ENCODE measurements at regions of chr6 and their contacts with region 1.

Region 1: DNA sequence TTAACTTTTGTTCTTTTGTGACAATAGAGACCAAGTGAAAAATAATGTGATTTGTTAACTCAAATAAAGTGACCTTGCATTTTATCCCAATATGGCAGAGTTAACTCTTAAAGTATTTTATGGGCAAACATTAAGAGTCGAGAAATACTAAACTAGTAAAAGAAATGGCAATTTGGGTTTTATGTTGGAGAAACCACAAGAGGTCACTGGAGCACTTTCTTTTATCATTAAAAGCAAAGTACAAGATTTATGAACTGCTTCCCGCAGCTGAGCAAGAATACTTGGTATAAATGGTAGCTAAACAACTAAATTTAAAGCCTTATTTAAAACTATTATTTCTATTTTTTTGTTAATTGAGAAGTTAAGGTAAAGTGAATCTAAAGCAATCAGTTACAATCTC is 33.5 kb upstream of the MCM9 start:
- DNase-seq: peak in 1 of 4 experiments; percentile 49
- ATAC-seq: peak; percentile 78
- H3K4me3 ChIP-seq: no peak overlapping the region
- H3K27ac ChIP-seq: no peak overlapping the region
- H3K4me1 ChIP-seq: no peaks in the 10 kb centered on the region
- H3K27me3 ChIP-seq: no peaks in the 10 kb centered on the region
- CTCF ChIP-seq: peak; percentile 23 to 73 (median 32); a peak in 3 of 6 replicates
- EP300 ChIP-seq: no peak
- POLR2A ChIP-seq: no peak
- RAD21 ChIP-seq: peak; percentile 83

Region 2: GRCh38 chr6:119078376-119079282 is 110.2 kb after region 1 on chr6 and contains the start of gene FAM184A:
- CTCF ChIA-PET with region 1: interaction called, 3 read pairs
- POLR2A ChIA-PET with region 1: no interaction called
- in situ Hi-C with region 1: no loop called
- intact Hi-C with region 1: loop called (anchors 2 kb)
- DNase-seq: peak; percentile 84 to 87 (median 86)
- ATAC-seq: peak; percentile 91
- H3K4me3 ChIP-seq: peak within 1 kb of the TSS; percentile 74
- H3K27ac ChIP-seq: peak within 1 kb of the TSS; percentile 79
- H3K4me1 ChIP-seq: peaks cover 13 to 15% of the 10 kb centered on the region in 2 experiments; a peak in 3 of 5 replicates
- H3K27me3 ChIP-seq: no peaks in the 10 kb centered on the region
- CTCF ChIP-seq: peak; percentile 58 to 92 (median 70)
- EP300 ChIP-seq: peak; percentile 13; the same call in 1 of the 2 replicates
- POLR2A ChIP-seq: peak; percentile 71
- RAD21 ChIP-seq: peak; percentile 35 to 53
- polyA plus RNA-seq, gene FAM184A: 6.4 to 9.3 TPM

Region 3: GRCh38 chr6:119110601-119111548 is 142.5 kb after region 1 on chr6:
- CTCF ChIA-PET with region 1: interaction called, 48 read pairs
- POLR2A ChIA-PET with region 1: interaction called, 7 read pairs
- in situ Hi-C with region 1: loop called (anchors 5 kb)
- intact Hi-C with region 1: loop called (anchors 1 kb)
- DNase-seq: peak; percentile 58 to 79 (median 64)
- ATAC-seq: peak; percentile 92
- H3K4me3 ChIP-seq: no peak overlapping the region
- H3K27ac ChIP-seq: no peak overlapping the region
- H3K4me1 ChIP-seq: peaks cover 3 to 16% of the 10 kb centered on the region in 2 experiments; a peak in 3 of 5 replicates
- H3K27me3 ChIP-seq: no peaks in the 10 kb centered on the region
- CTCF ChIP-seq: peak; percentile 68 to 86 (median 72)
- EP300 ChIP-seq: no peak
- POLR2A ChIP-seq: no peak
- RAD21 ChIP-seq: peak; percentile 97 to 98

Region 4: GRCh38 chr6:119340796-119341487 is 372.5 kb after region 1 on chr6:
- CTCF ChIA-PET with region 1: no interaction called
- POLR2A ChIA-PET with region 1: no interaction called
- in situ Hi-C with region 1: no loop called
- intact Hi-C with region 1: loop called (anchors 5 kb)
- DNase-seq: peak in 1 of 4 experiments; percentile 25
- ATAC-seq: peak; percentile 11
- H3K4me3 ChIP-seq: peak overlapping the region; percentile 6
- H3K27ac ChIP-seq: peak overlapping the region; percentile 53
- H3K4me1 ChIP-seq: peaks cover 5 to 58% of the 10 kb centered on the region in 2 experiments; a peak in 4 of 5 replicates
- H3K27me3 ChIP-seq: no peaks in the 10 kb centered on the region
- CTCF ChIP-seq: no peak
- EP300 ChIP-seq: no peak
- POLR2A ChIP-seq: no peak
- RAD21 ChIP-seq: no peak